H1 (cell line): ENCODE measurements at regions of chr14 and their contacts with region 1.

Region 1: GRCh38 chr14:35046048-35046741 is at the start of gene FAM177A1:
- DNase-seq: peak; percentile 83 to 95
- H3K4me3 ChIP-seq: peak within 1 kb of the TSS; percentile 67 to 87 (median 80)
- H3K27ac ChIP-seq: peak within 1 kb of the TSS; percentile 82
- H3K4me1 ChIP-seq: no peaks in the 10 kb centered on the region; a peak in 1 of 7 replicates
- H3K27me3 ChIP-seq: no peaks in the 10 kb centered on the region
- CTCF ChIP-seq: no peak
- EP300 ChIP-seq: no peak
- POLR2A ChIP-seq: peak; percentile 75 to 86
- RAD21 ChIP-seq: peak in 1 of 2 experiments; percentile 3; a peak in 1 of 4 replicates
- total RNA-seq, gene FAM177A1: 32.0 and 34.0 TPM in 2 replicates

Region 2: GRCh38 chr14:35016568-35016967 is 29.6 kb before region 1 on chr14:
- CTCF ChIA-PET with region 1: no interaction called
- POLR2A ChIA-PET with region 1: no interaction called
- DNase-seq: no peak
- H3K4me3 ChIP-seq: no peak overlapping the region
- H3K27ac ChIP-seq: no peak overlapping the region
- H3K4me1 ChIP-seq: no peaks in the 10 kb centered on the region
- H3K27me3 ChIP-seq: no peaks in the 10 kb centered on the region
- CTCF ChIP-seq: no peak
- EP300 ChIP-seq: no peak
- POLR2A ChIP-seq: no peak
- RAD21 ChIP-seq: no peak

Region 3: DNA sequence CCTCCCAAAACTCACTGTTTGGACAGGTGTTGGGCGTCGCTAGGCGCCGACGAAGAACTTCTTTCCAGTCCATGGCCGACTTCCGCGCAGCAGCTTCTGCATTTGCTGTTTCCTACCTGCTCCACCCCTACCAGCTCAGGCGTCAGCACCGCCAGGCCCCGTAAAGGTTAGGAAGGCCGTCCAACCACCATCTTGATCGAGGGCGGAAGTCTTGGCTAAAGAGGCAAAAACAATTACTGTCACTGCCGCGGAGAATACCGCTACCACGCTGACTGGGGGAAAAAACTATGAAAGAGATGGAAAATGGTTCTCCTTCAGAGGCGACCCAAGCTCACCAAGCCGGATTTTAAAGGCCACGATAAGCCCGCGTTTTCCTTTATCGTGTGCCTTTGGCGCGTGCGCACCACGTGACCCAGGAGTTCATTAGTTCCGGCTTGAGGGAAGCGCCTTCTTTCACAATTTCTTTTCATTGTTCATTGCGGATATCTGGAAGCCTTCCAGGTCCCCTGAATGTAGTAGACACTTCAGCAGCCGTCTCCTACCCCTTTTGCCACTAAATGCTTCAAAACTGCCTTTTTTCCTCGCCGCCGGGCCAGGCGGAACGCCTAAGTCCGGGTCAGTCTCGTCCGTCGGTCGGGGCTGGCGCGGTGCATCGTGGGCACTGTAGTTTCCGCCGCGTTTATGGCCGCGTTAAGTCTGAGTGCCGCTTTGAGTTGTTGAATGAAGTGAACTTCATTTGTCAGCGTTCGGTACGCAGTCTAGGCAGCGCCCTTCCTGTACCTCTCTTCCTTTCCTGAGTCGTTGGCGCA is 75.9 kb after region 1 on chr14 and contains the starts of genes PPP2R3C and PRORP:
- CTCF ChIA-PET with region 1: no interaction called
- POLR2A ChIA-PET with region 1: interaction called, 17 read pairs
- DNase-seq: peak; percentile 87 to 95
- H3K4me3 ChIP-seq: peak within 1 kb of the TSS; percentile 90 to 97 (median 93)
- H3K27ac ChIP-seq: peak within 1 kb of the TSS; percentile 99
- H3K4me1 ChIP-seq: peaks cover 0 to 4% (median 2%) of the 10 kb centered on the region in 4 experiments; a peak in 3 of 7 replicates
- H3K27me3 ChIP-seq: no peaks in the 10 kb centered on the region
- CTCF ChIP-seq: no peak
- EP300 ChIP-seq: peak in 1 of 2 experiments; percentile 28; a peak in 1 of 3 replicates
- POLR2A ChIP-seq: peak; percentile 84 to 97
- RAD21 ChIP-seq: no peak
- total RNA-seq, gene PPP2R3C: 24.6 and 26.7 TPM in 2 replicates
- total RNA-seq, gene PRORP: 43.9 and 44.8 TPM in 2 replicates

Region 4: GRCh38 chr14:35133542-35134327 is 87.5 kb after region 1 on chr14:
- CTCF ChIA-PET with region 1: no interaction called
- POLR2A ChIA-PET with region 1: no interaction called
- DNase-seq: no peak
- H3K4me3 ChIP-seq: no peak overlapping the region
- H3K27ac ChIP-seq: no peak overlapping the region
- H3K4me1 ChIP-seq: no peaks in the 10 kb centered on the region
- H3K27me3 ChIP-seq: no peaks in the 10 kb centered on the region
- CTCF ChIP-seq: no peak
- EP300 ChIP-seq: no peak
- POLR2A ChIP-seq: no peak
- RAD21 ChIP-seq: no peak

Region 5: DNA sequence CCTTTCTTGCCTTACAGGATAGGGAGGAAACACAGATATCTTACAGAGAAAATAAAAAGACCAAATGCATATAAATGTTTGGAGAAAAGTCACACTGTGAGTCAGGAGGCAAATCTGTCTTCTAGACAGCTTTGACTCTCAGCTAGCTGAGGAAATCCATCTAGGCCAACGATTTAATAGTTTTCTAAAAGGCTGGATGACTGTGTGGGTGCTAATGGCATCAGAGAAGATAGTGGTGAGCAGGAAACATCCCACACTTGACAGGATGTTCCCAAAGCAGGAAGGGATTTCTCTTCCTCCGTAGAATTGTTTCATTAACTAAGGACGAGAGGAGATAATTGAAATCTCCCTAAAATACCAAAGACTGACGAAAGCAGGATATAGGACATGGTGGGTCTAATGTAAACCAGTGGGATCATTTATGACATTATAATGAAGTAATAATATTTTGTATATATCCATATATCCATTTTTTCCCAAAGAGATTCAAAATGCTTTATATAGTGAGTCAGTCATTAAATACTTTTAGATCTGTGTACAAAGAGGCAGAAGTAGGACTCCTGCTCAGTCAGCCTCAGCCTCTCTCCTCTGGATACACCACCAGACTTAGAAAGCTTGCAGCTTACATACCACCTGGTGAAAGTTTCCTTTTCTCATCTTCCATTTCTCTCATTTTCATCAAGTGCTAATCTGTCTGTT is 201.7 kb after region 1 on chr14:
- CTCF ChIA-PET with region 1: no interaction called
- POLR2A ChIA-PET with region 1: no interaction called
- DNase-seq: no peak
- H3K4me3 ChIP-seq: no peak overlapping the region
- H3K27ac ChIP-seq: no peak overlapping the region
- H3K4me1 ChIP-seq: no peaks in the 10 kb centered on the region
- H3K27me3 ChIP-seq: no peaks in the 10 kb centered on the region
- CTCF ChIP-seq: no peak
- EP300 ChIP-seq: no peak
- POLR2A ChIP-seq: no peak
- RAD21 ChIP-seq: no peak